Activated CD4-positive, alpha-beta memory T cell treated with anti-CD3 and anti-CD28 coated beads for 36 hours (primary cell): ENCODE measurements at regions of chr19 and their contacts with region 1.

Region 1: GRCh38 chr19:44770550-44771257 is 7.0 kb upstream of the CBLC start:
- DNase-seq: peak; percentile 99
- H3K4me3 Mint-ChIP-seq: peak overlapping the region; percentile 31
- H3K27ac Mint-ChIP-seq: peak overlapping the region; percentile 24
- H3K4me1 Mint-ChIP-seq: peaks cover 26% of the 10 kb centered on the region
- H3K27me3 Mint-ChIP-seq: no peaks in the 10 kb centered on the region

Region 2: GRCh38 chr19:44653977-44654774 is 116.5 kb before region 1 on chr19:
- CTCF ChIA-PET with region 1: interaction called, 16 read pairs
- POLR2A ChIA-PET with region 1: no interaction called
- intact Hi-C with region 1: loop called (anchors 1 kb)
- DNase-seq: peak; percentile 87
- H3K4me3 Mint-ChIP-seq: no peak overlapping the region
- H3K27ac Mint-ChIP-seq: no peak overlapping the region
- H3K4me1 Mint-ChIP-seq: peaks cover 10% of the 10 kb centered on the region
- H3K27me3 Mint-ChIP-seq: no peaks in the 10 kb centered on the region

Region 3: DNA sequence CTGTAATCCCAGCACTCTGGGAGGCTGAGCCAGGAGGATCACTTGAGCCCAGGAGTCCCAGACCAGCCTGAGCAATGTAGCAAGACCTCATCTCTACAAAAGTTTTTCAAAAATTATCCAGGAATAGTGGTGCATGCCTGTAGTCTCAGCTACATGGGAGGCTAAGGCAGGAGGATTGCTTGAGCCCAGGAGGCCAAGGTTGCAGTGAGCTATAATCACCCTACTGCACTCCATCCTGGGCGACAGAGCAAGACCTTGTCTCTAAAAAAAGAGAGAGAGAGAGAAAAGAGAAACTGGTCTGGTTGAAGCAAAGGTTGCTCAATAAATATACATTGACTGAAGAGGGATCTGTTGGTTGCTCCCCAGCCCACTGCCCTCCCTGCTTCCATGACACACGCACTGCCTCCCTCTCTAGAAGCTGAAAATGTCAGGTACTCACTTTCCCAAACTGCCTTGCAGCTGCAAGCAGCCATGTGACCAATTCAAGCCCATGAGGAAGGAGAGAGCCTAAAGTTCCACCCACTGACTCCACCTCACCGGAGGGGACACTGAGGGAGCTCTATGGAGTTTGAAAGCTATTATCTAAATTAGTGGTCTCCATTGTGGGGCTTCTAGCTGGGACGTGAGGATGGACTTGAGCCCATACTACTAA is 57.7 kb before region 1 on chr19:
- CTCF ChIA-PET with region 1: interaction called, 11 read pairs
- POLR2A ChIA-PET with region 1: no interaction called
- intact Hi-C with region 1: no loop called
- DNase-seq: no peak
- H3K4me3 Mint-ChIP-seq: no peak overlapping the region
- H3K27ac Mint-ChIP-seq: no peak overlapping the region
- H3K4me1 Mint-ChIP-seq: no peaks in the 10 kb centered on the region
- H3K27me3 Mint-ChIP-seq: no peaks in the 10 kb centered on the region

Region 4: DNA sequence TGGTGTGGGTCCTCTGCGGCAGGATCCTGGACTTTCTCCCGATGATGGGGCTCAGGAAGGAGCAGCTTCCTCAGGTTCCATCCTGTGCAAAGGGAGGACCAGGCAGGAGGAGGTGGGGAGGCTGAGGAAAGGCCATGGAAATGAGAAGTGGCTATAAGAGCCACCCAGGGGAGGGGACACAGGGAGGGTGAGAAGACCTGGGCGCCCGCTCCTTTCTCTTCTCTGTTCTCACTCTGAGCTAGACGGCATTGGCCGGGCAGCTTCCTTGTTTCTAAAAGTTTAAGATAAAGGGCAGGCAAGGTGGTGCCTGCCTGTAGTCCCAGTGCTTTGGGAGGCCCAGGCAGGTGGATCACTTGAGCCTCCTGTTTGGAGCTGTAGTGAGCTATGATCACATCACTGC is 38.1 kb before region 1 on chr19:
- CTCF ChIA-PET with region 1: interaction called, 36 read pairs
- POLR2A ChIA-PET with region 1: interaction called, 3 read pairs
- intact Hi-C with region 1: no loop called
- DNase-seq: no peak
- H3K4me3 Mint-ChIP-seq: no peak overlapping the region
- H3K27ac Mint-ChIP-seq: no peak overlapping the region
- H3K4me1 Mint-ChIP-seq: peaks cover 17% of the 10 kb centered on the region
- H3K27me3 Mint-ChIP-seq: no peaks in the 10 kb centered on the region

Region 5: GRCh38 chr19:44752816-44753618 is 17.7 kb before region 1 on chr19:
- CTCF ChIA-PET with region 1: interaction called, 43 read pairs
- POLR2A ChIA-PET with region 1: interaction called, 19 read pairs
- intact Hi-C with region 1: loop called (anchors 1 kb)
- DNase-seq: peak; percentile 99
- H3K4me3 Mint-ChIP-seq: peak overlapping the region; percentile 93
- H3K27ac Mint-ChIP-seq: peak overlapping the region; percentile 99
- H3K4me1 Mint-ChIP-seq: peaks cover 52% of the 10 kb centered on the region
- H3K27me3 Mint-ChIP-seq: no peaks in the 10 kb centered on the region

Region 6: DNA sequence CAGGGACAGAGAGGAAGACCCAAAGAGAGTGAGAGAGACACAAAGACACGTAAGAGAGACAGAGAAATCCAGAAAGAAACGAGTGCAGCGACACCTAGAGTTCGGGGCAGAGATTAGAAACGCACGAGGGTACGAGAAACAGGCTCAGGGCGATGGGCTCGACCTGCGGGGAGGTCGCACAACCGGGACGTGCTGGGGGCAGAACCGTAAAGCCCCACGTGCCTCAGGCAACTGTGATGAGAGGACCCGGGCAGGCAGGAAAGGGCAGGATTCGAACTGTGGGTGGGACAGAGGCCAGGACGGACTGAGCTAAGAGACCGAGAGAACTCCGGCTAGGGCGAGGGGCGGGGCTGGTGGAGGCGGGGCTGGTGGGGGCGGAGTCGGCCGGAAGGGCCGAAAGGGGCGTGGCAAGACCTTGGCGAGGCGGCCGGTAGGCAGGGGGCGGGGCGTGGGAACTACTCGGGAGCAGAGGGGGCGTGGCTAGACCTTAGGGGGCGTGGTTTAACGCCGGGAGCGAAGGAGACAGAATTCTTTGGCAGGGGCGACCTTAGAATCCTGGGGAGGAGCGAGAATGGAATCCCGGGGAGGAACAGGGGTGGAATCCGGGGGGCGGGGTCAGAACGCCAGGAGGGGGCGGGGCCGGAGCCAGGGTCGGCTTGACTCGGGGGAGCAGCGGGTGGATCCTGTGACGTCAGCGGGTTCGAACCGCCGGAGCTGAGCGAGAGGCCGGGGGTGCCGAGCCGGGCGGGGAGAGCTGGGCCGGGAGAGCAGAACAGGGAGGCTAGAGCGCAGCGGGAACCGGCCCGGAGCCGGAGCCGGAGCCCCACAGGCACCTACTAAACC is 75.1 kb after region 1 on chr19 and contains the start of gene NECTIN2:
- CTCF ChIA-PET with region 1: interaction called, 5 read pairs
- POLR2A ChIA-PET with region 1: no interaction called
- intact Hi-C with region 1: loop called (anchors 1 kb)
- DNase-seq: peak; percentile 96
- H3K4me3 Mint-ChIP-seq: peak within 1 kb of the TSS; percentile 81
- H3K27ac Mint-ChIP-seq: peak within 1 kb of the TSS; percentile 24
- H3K4me1 Mint-ChIP-seq: peaks cover 26% of the 10 kb centered on the region
- H3K27me3 Mint-ChIP-seq: peaks cover 11% of the 10 kb centered on the region
- total RNA-seq, gene NECTIN2: 0.71 to 1.9 TPM